MCF 10A (cell line): ENCODE measurements at regions of chr20 and their contacts with region 1.

Region 1: GRCh38 chr20:5608442-5609161 is 141.6 kb upstream of the SHLD1 start:
- DNase-seq: peak; percentile 61
- H3K4me3 Mint-ChIP-seq: peak overlapping the region; percentile 91
- H3K27ac Mint-ChIP-seq: peak overlapping the region; percentile 94
- H3K4me1 Mint-ChIP-seq: peaks cover 35% of the 10 kb centered on the region
- H3K27me3 Mint-ChIP-seq: no peaks in the 10 kb centered on the region
- CTCF ChIP-seq: no peak

Region 2: GRCh38 chr20:5109276-5109675 is 499.3 kb before region 1 on chr20:
- CTCF ChIA-PET with region 1: no interaction called
- POLR2A ChIA-PET with region 1: no interaction called
- intact Hi-C with region 1: no loop called
- DNase-seq: no peak
- H3K4me3 Mint-ChIP-seq: no peak overlapping the region
- H3K27ac Mint-ChIP-seq: no peak overlapping the region
- H3K4me1 Mint-ChIP-seq: no peaks in the 10 kb centered on the region
- H3K27me3 Mint-ChIP-seq: no peaks in the 10 kb centered on the region
- CTCF ChIP-seq: no peak

Region 3: DNA sequence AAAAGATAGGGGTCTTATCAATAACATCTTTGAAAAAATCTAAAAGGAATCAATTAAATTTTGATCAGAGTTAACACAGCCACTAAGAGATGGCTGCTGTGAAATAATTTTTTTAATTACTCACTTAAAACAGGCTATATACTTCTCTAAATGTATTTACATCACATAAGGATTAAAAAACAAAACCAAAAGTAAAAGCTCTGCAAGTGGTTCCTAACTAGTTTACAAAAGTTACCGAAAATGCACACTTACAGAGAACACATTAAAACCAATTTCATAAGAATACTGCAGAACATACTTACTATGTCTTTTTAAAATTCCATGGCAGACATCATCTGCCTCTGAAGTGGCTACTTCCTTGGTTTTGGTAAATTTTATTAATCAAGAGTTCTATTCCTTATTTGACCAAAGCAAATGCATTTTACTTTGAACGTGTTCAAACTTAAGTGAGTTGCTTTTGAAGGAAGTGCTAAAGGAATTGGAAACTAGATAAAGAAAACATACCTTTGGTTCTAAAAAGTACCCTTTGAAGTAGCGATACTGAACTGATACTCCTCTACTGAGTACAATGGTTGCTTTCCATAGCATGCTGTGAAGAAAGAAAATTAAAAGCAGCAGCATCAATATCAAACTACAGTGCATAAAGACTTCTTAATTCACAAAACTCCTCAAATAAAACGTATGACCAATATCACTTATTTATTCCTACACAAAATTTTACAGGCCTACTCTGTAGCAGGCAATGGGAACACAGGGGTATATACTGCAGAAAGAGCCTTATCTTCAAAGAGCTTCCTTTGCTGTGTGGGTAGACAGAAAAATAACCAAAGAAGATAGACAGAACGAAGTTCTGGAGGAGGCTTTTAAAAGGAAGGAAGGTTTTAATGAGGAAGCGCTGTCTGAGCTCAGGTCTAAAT is 15.5 kb before region 1 on chr20:
- CTCF ChIA-PET with region 1: interaction called, 3 read pairs
- POLR2A ChIA-PET with region 1: interaction called, 11 read pairs
- intact Hi-C with region 1: no loop called
- DNase-seq: no peak
- H3K4me3 Mint-ChIP-seq: no peak overlapping the region
- H3K27ac Mint-ChIP-seq: no peak overlapping the region
- H3K4me1 Mint-ChIP-seq: peaks cover 6% of the 10 kb centered on the region
- H3K27me3 Mint-ChIP-seq: no peaks in the 10 kb centered on the region
- CTCF ChIP-seq: no peak

Region 4: DNA sequence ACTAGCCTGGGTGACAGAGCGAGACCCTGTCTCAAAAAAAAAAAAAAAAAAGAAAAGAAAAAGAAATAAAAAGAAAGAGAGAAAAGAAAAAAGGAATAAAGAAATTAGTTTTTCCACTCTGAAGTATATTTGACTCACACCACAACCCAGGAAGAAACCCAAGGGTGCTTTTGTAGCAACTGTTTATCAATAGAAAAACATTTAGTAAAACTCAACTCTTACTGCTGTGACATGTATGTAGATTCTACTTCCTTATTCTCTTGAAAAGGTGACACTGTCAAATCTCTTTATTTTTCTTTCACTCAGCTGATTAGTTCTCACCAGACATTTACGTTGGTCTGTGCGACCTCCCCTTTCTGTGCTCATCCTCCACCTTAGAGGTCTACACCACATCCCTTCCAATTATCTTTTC is 41.7 kb after region 1 on chr20:
- CTCF ChIA-PET with region 1: interaction called, 10 read pairs
- POLR2A ChIA-PET with region 1: no interaction called
- intact Hi-C with region 1: no loop called
- DNase-seq: no peak
- H3K4me3 Mint-ChIP-seq: no peak overlapping the region
- H3K27ac Mint-ChIP-seq: peak overlapping the region; percentile 61
- H3K4me1 Mint-ChIP-seq: peaks cover 35% of the 10 kb centered on the region
- H3K27me3 Mint-ChIP-seq: no peaks in the 10 kb centered on the region
- CTCF ChIP-seq: no peak

Region 5: GRCh38 chr20:5696011-5696559 is 87.5 kb after region 1 on chr20:
- CTCF ChIA-PET with region 1: no interaction called
- POLR2A ChIA-PET with region 1: interaction called, 6 read pairs
- intact Hi-C with region 1: loop called (anchors 1 kb)
- DNase-seq: peak; percentile 97
- H3K4me3 Mint-ChIP-seq: no peak overlapping the region
- H3K27ac Mint-ChIP-seq: peak overlapping the region; percentile 75
- H3K4me1 Mint-ChIP-seq: peaks cover 11% of the 10 kb centered on the region
- H3K27me3 Mint-ChIP-seq: no peaks in the 10 kb centered on the region
- CTCF ChIP-seq: no peak

Region 6: GRCh38 chr20:5749952-5750779 is 141.6 kb after region 1 on chr20 and contains the start of gene SHLD1:
- CTCF ChIA-PET with region 1: interaction called, 4 read pairs
- POLR2A ChIA-PET with region 1: interaction called, 4 read pairs
- intact Hi-C with region 1: loop called (anchors 5 kb)
- DNase-seq: peak; percentile 85
- H3K4me3 Mint-ChIP-seq: peak within 1 kb of the TSS; percentile 78
- H3K27ac Mint-ChIP-seq: peak within 1 kb of the TSS; percentile 95
- H3K4me1 Mint-ChIP-seq: peaks cover 3% of the 10 kb centered on the region
- H3K27me3 Mint-ChIP-seq: no peaks in the 10 kb centered on the region
- CTCF ChIP-seq: no peak
- total RNA-seq, gene SHLD1: 2.3 and 3.3 TPM in 2 replicates